ENCODE measurements at regions of chr2 and their contacts with region 1.

Region 1: GRCh38 chr2:36355151-36355889 is at the start of gene CRIM1:
- DNase-seq: peak; percentile 81 to 96
- H3K4me3 ChIP-seq: peak within 1 kb of the TSS; percentile 87 to 94 (median 90)
- H3K27ac ChIP-seq: peak within 1 kb of the TSS; percentile 68 to 94 (median 87)
- H3K4me1 ChIP-seq: peaks cover 28 to 74% (median 44%) of the 10 kb centered on the region in 4 donors
- H3K27me3 ChIP-seq: peaks cover 0 to 24% (median 0%) of the 10 kb centered on the region in 3 donors
- CTCF ChIP-seq: no peak
- EP300 ChIP-seq: no peak
- POLR2A ChIP-seq: no peak
- total RNA-seq, gene CRIM1: 46.5 to 158 (median 104) TPM

Region 2: DNA sequence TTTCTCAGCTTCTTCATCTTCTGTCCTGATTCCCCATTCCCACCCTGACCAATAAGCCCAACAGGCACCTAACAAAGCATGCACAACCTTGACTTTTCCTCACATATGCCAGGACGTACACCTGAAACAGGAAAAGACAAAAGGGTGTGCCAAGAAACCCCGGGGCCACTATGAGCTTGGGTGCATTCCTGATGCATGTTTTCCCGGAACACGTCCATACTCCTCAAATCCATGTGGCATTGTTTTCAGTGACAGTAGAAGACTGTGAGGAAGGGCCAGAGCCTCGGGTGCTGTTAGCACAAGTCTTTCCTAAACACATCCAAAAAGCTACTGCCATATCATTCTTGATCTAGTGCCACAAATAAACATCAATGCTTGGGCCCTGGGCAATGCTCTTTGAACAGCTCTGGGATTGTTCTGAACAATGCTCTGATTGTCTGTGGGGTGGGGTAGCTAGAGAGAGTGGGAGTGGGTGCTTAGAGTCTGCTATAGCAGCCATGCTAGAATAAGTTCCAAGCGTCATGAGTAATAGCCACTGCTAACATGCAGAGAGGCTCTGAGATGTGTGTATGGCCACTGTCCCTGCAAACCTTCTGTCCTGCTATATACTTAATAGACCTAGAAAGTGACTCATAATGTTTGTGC is 181.4 kb before region 1 on chr2:
- intact Hi-C with region 1: no loop called
- DNase-seq: no peak
- H3K4me3 ChIP-seq: no peak overlapping the region
- H3K27ac ChIP-seq: no peak overlapping the region
- H3K4me1 ChIP-seq: no peaks in the 10 kb centered on the region
- H3K27me3 ChIP-seq: no peaks in the 10 kb centered on the region
- CTCF ChIP-seq: no peak
- EP300 ChIP-seq: no peak
- POLR2A ChIP-seq: no peak

Region 3: GRCh38 chr2:36507408-36507812 is 152.1 kb after region 1 on chr2:
- intact Hi-C with region 1: loop called (anchors 5 kb)
- DNase-seq: peak; percentile 48 to 82
- H3K4me3 ChIP-seq: no peak overlapping the region
- H3K27ac ChIP-seq: no peak overlapping the region
- H3K4me1 ChIP-seq: peaks cover 0 to 9% (median 5%) of the 10 kb centered on the region in 4 donors
- H3K27me3 ChIP-seq: no peaks in the 10 kb centered on the region
- CTCF ChIP-seq: peak in 5 of 7 experiments; percentile 49 to 73 (median 57)
- EP300 ChIP-seq: no peak
- POLR2A ChIP-seq: peak in 1 of 4 donors; percentile 22

Region 4: GRCh38 chr2:36530178-36530982 is 175.1 kb after region 1 on chr2:
- intact Hi-C with region 1: no loop called
- DNase-seq: no peak
- H3K4me3 ChIP-seq: no peak overlapping the region
- H3K27ac ChIP-seq: no peak overlapping the region
- H3K4me1 ChIP-seq: peaks cover 0 to 11% (median 0%) of the 10 kb centered on the region in 4 donors
- H3K27me3 ChIP-seq: no peaks in the 10 kb centered on the region
- CTCF ChIP-seq: no peak
- EP300 ChIP-seq: no peak
- POLR2A ChIP-seq: no peak

Region 5: DNA sequence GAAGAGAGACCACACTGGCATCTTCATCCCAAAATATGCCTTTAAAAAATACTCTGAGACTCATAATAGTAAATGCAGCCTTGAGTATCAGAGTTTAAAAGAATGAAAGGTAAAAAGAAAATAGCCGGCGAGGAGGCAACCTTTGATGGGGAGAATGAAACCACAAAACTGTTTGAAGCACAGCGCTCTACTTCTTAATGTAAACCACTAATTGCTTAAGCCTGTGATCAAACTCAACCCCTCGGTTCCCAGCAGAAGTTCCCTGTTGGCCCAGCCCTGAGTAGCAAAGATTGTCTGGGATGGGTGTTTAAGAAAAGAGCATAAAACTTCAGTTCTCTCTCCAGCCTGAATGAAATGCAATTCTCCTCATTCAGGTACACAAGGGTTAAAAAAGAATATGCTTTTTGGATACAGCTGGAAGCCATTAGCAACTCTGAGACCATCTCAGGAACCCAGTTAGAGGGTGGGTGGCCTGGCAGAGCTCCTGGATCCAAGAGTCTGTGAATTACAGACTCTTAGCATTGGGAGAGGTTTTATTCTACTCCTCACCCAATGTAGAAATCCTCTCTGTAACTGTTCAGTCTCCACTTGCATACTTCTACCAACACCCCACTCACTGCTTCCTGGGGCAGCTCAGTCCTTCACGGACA is 386.0 kb after region 1 on chr2:
- intact Hi-C with region 1: no loop called
- DNase-seq: peak in 1 of 2 donors; percentile 33
- H3K4me3 ChIP-seq: no peak overlapping the region
- H3K27ac ChIP-seq: no peak overlapping the region
- H3K4me1 ChIP-seq: no peaks in the 10 kb centered on the region
- H3K27me3 ChIP-seq: no peaks in the 10 kb centered on the region
- CTCF ChIP-seq: no peak
- EP300 ChIP-seq: no peak
- POLR2A ChIP-seq: no peak

Region 6: GRCh38 chr2:36785179-36785795 is 430.0 kb after region 1 on chr2:
- intact Hi-C with region 1: loop called (anchors 10 kb)
- DNase-seq: peak; percentile 69 to 86
- H3K4me3 ChIP-seq: no peak overlapping the region
- H3K27ac ChIP-seq: no peak overlapping the region
- H3K4me1 ChIP-seq: peaks cover 0 to 2% (median 0%) of the 10 kb centered on the region in 4 donors
- H3K27me3 ChIP-seq: no peaks in the 10 kb centered on the region
- CTCF ChIP-seq: peak in 5 of 7 experiments; percentile 81 to 97 (median 95)
- EP300 ChIP-seq: no peak
- POLR2A ChIP-seq: no peak

Measured in stomach (tissue), 19 donors.